ENCODE measurements at regions of chr2 and their contacts with region 1.

Region 1: DNA sequence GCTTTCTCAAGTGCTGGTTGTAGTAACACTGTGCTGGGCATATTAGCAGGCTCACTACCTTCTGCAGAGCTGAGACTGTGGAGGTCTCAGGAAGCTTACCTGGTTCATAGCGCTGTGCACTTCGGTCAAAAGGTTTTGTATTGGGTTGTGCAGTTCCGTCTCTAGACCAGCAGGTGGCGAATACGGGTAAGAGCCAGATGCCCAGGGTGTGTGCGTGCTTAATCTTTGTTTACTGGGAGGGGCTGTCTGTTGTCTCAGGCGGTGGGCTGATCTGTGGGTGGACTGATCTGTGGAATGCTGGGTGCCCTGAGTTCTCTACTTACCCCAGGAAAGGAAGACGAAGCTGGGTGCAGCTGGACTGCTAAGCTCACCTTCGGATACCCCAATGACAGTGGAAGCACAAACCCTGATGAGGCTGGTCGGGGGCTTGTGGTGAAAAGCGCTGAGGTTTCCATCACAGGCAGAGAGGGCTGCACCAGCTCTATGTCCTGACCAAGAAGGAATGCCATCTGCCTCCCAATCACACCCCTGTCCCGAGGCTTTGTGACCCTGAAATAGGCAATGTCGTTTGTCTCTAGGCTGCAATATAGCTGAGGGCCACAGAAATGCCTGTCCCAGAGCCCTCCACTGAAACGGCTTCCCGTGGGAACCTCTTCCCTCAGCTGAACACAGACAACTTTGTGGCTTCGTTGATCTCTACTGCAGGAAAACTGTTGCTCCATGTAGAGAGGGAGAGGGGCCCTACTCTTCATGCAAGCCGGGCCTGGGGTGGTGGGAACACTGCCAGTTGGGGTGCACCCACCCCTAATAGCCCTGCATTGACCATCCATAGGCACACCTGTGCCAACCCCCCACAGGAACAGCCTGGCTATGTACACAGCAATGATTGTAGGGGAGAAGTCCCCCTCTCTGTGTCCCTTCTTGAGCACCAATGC is 45.9 kb upstream of the FAM117B start:
- DNase-seq: peak; percentile 78
- CTCF ChIP-seq: peak; percentile 81

Region 2: DNA sequence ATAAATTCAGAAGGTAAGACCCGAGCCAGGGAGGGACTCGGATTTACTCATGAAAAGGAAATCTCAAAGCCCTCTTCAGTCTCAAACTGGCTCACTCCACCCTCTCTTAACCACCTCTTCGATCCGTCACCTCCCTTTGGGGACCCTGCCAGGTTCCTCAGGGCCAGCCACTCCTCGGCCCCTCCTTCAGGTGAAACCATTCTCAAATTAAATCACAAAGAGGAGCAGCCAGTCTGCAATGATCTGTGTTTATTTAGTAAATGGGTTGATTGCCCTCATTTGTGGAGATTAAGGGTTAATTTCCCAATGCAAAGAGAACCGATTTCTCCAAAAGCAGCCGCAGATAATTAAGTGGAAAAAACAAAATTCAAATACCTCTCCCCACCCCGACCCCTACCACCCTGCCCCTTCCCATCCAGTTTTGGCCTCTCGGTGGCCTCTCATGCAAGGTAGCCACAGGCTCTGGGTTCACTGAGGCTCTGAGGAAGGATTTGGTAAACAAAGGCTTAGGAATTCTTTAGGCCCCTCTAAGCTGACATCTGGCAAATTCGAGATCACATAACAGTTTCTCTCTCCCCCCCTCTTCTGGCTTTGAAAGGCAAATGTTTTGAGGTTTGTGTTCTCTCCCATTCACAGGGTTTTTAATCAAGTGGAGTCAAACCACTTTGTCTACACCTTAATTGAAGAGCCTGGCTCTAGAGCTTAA is 565.6 kb before region 1 on chr2:
- CTCF ChIA-PET with region 1: no interaction called
- POLR2A ChIA-PET with region 1: no interaction called
- DNase-seq: no peak
- CTCF ChIP-seq: no peak

Region 3: GRCh38 chr2:202339071-202339870 is 249.6 kb before region 1 on chr2:
- CTCF ChIA-PET with region 1: no interaction called
- POLR2A ChIA-PET with region 1: no interaction called
- DNase-seq: no peak
- CTCF ChIP-seq: no peak

Region 4: GRCh38 chr2:202564226-202564625 is 24.7 kb before region 1 on chr2:
- CTCF ChIA-PET with region 1: interaction called, 10 read pairs
- POLR2A ChIA-PET with region 1: no interaction called
- DNase-seq: no peak
- CTCF ChIP-seq: no peak

Region 5: GRCh38 chr2:202602285-202602684 is 13.4 kb after region 1 on chr2:
- CTCF ChIA-PET with region 1: interaction called, 80 read pairs
- POLR2A ChIA-PET with region 1: no interaction called
- DNase-seq: no peak
- CTCF ChIP-seq: no peak

Region 6: GRCh38 chr2:202609381-202610145 is 20.6 kb after region 1 on chr2:
- CTCF ChIA-PET with region 1: interaction called, 10 read pairs
- POLR2A ChIA-PET with region 1: no interaction called
- DNase-seq: peak; percentile 64
- CTCF ChIP-seq: no peak

Region 7: GRCh38 chr2:202634556-202635427 is 45.9 kb after region 1 on chr2 and contains the start of gene FAM117B:
- CTCF ChIA-PET with region 1: interaction called, 10 read pairs
- POLR2A ChIA-PET with region 1: no interaction called
- DNase-seq: peak; percentile 96
- CTCF ChIP-seq: no peak

Region 8: GRCh38 chr2:202870431-202871299 is 281.8 kb after region 1 on chr2:
- CTCF ChIA-PET with region 1: interaction called, 18 read pairs
- POLR2A ChIA-PET with region 1: no interaction called
- DNase-seq: peak; percentile 78
- CTCF ChIP-seq: peak; percentile 70